ENCODE measurements at regions of chr22 and their contacts with region 1.

Region 1: GRCh38 chr22:41746567-41747400 is 47.5 kb downstream of the MEI1 start:
- DNase-seq: peak; percentile 74
- ATAC-seq: peak; percentile 98
- H3K4me3 Mint-ChIP-seq: no peak overlapping the region
- H3K27ac Mint-ChIP-seq: no peak overlapping the region
- H3K4me1 Mint-ChIP-seq: peaks cover 3% of the 10 kb centered on the region
- H3K27me3 Mint-ChIP-seq: peaks cover 6% of the 10 kb centered on the region

Region 2: GRCh38 chr22:41713004-41713403 is 33.8 kb before region 1 on chr22:
- CTCF ChIA-PET with region 1: interaction called, 10 read pairs
- POLR2A ChIA-PET with region 1: interaction called, 3 read pairs
- intact Hi-C with region 1: no loop called
- DNase-seq: no peak
- ATAC-seq: no peak
- H3K4me3 Mint-ChIP-seq: no peak overlapping the region
- H3K27ac Mint-ChIP-seq: no peak overlapping the region
- H3K4me1 Mint-ChIP-seq: no peaks in the 10 kb centered on the region
- H3K27me3 Mint-ChIP-seq: no peaks in the 10 kb centered on the region

Region 3: GRCh38 chr22:41800348-41801146 is 53.8 kb after region 1 on chr22 and contains the start of gene CCDC134:
- CTCF ChIA-PET with region 1: interaction called, 5 read pairs
- POLR2A ChIA-PET with region 1: interaction called, 3 read pairs
- intact Hi-C with region 1: loop called (anchors 2 to 5 kb)
- DNase-seq: peak; percentile 95
- ATAC-seq: peak; percentile 98
- H3K4me3 Mint-ChIP-seq: peak within 1 kb of the TSS; percentile 91
- H3K27ac Mint-ChIP-seq: peak within 1 kb of the TSS; percentile 96
- H3K4me1 Mint-ChIP-seq: peaks cover 38% of the 10 kb centered on the region
- H3K27me3 Mint-ChIP-seq: no peaks in the 10 kb centered on the region
- total RNA-seq, gene CCDC134: 14.7 to 15.2 TPM

Measured in activated CD4-positive, alpha-beta T cell treated with anti-CD3 and anti-CD28 coated beads for 36 hours (primary cell).